GM23248 (cell line): ENCODE measurements at regions of chr10 and their contacts with region 1.

Region 1: GRCh38 chr10:100551196-100551595 is 15.5 kb downstream of the HIF1AN start:
- DNase-seq: no peak
- H3K4me3 ChIP-seq: no peak overlapping the region
- H3K27ac ChIP-seq: no peak overlapping the region
- H3K4me1 ChIP-seq: no peaks in the 10 kb centered on the region
- H3K27me3 ChIP-seq: no peaks in the 10 kb centered on the region

Region 2: GRCh38 chr10:100670828-100671479 is 119.8 kb after region 1 on chr10:
- in situ Hi-C with region 1: no loop called
- DNase-seq: peak; percentile 53
- H3K4me3 ChIP-seq: peak overlapping the region; percentile 45; the same call in 1 of the 2 replicates
- H3K27ac ChIP-seq: no peak overlapping the region
- H3K4me1 ChIP-seq: no peaks in the 10 kb centered on the region
- H3K27me3 ChIP-seq: peaks cover 65% of the 10 kb centered on the region

Region 3: GRCh38 chr10:100878291-100878910 is 327.2 kb after region 1 on chr10:
- in situ Hi-C with region 1: loop called (anchors 10 kb)
- DNase-seq: peak; percentile 86
- H3K4me3 ChIP-seq: no peak overlapping the region
- H3K27ac ChIP-seq: no peak overlapping the region
- H3K4me1 ChIP-seq: peaks cover 8% of the 10 kb centered on the region; the same call in 1 of the 2 replicates
- H3K27me3 ChIP-seq: no peaks in the 10 kb centered on the region

Region 4: DNA sequence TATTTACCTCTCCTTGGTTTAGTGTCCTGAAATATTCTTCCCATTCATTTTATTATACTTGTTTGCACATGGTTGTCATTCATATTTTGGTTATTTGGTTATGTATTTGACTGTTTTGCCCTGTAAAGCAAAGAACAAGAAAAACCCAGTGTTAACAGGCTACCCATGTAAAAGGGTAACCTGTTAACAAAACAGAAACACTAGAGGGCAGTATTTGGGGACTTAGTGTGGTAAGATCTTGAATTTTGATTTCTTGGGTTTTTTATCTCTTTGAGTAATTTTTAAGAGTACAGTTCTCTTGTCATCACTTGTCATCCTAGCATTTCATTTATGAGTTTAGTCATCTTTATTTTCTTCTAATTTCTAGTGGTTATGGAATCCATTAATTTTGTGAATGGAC is 985.6 kb after region 1 on chr10:
- in situ Hi-C with region 1: no loop called
- DNase-seq: peak; percentile 56
- H3K4me3 ChIP-seq: no peak overlapping the region
- H3K27ac ChIP-seq: no peak overlapping the region
- H3K4me1 ChIP-seq: no peaks in the 10 kb centered on the region
- H3K27me3 ChIP-seq: no peaks in the 10 kb centered on the region